ENCODE measurements at regions of chr10 and their contacts with region 1.

Region 1: GRCh38 chr10:24826019-24826418 is 102.3 kb upstream of the ARHGAP21 start:
- DNase-seq: peak; percentile 75
- H3K4me3 ChIP-seq: peak overlapping the region in 2 of 3 experiments; percentile 6 to 12
- H3K27ac ChIP-seq: peak overlapping the region; percentile 46
- H3K4me1 ChIP-seq: peaks cover 36% of the 10 kb centered on the region
- H3K27me3 ChIP-seq: no peaks in the 10 kb centered on the region
- CTCF ChIP-seq: no peak

Region 2: DNA sequence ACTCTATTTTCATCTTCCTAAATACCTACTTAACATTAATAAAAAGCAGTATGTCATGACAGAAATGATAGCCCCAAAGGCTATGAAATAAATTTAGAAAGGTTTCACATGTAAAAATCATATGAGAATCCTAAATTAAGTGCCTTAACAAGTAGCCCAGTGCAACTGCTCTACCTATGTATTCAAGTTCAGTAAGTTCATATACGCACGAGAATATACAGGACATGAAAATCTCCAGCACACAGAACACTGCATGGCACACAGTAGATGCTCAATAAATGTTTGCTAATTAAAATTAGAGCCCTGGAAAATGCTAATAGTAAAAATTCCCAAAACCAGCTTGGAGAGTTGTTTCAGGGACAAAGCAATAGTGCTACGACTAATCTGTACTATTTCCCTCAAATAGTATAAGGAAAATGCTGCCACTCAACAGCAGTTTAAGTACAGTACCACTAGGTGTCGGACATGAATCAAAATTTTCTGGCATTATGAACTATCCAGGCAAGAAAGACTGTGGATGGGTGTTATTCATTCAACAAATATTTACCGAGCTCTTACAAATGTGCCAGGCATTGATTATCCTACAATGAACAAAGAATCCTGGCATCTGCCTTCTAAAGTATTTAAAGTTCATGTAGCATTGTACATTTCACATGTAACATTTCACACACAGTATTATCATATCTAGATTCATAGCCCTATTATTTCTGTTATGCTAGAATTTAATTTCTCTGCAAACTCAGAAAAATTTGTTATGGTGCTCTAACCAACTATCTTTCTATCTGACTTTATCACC is 183.2 kb before region 1 on chr10:
- CTCF ChIA-PET with region 1: no interaction called
- dilution Hi-C with region 1: no loop called
- in situ Hi-C with region 1: no loop called
- intact Hi-C with region 1: loop called (anchors 10 kb)
- DNase-seq: peak; percentile 73
- H3K4me3 ChIP-seq: no peak overlapping the region
- H3K27ac ChIP-seq: no peak overlapping the region
- H3K4me1 ChIP-seq: peaks cover 10% of the 10 kb centered on the region
- H3K27me3 ChIP-seq: no peaks in the 10 kb centered on the region
- CTCF ChIP-seq: peak; percentile 76 to 81

Region 3: DNA sequence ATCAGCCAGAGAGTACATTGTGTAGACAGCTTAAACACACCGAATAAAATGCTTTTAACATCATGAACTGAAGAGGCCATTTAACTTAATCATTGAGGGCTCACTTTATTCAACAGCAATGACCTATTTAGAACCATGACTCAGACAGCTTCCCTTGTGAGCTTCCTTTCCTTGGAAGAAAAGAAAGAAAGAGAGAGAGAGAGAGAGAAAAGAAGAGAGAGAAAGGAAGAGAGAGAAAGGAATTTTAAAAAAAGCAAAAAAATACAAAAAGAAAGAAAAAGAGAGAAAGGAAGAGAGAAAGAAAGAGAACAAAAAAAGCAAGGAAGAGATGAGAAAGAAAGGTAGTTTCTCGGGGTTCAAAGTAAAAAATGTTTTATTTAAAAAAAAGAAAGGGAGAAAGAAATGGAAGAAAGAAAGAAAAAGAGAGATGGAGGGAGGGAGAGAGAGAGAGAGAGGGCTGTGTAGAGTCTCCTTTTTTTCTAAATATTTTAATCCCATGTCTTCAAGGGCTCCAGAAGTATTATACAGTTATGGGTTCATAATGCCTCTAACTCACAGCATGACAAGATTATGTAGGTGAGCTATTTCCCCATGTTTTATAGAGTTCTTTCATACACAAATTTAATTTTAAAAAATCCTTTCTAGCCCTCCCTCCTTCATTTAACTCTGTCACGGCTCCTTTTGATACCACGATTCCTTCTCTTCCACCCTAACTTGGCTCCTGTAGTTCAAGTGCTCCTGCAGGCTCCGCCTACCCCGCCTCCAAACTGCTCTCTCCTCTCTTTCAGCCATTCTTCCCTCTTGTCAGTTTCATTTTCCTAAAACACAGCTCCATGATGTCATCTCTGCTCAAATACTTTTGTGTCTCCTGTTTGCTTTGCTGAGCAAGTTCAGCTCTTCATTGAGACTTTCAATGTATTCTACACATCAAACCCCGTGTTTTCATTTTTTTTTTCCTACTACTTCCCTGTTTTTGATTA is 40.9 kb after region 1 on chr10:
- CTCF ChIA-PET with region 1: interaction called, 3 read pairs
- dilution Hi-C with region 1: no loop called
- in situ Hi-C with region 1: no loop called
- intact Hi-C with region 1: loop called (anchors 5 kb)
- DNase-seq: peak; percentile 64
- H3K4me3 ChIP-seq: no peak overlapping the region
- H3K27ac ChIP-seq: peak overlapping the region; percentile 42
- H3K4me1 ChIP-seq: peaks cover 26% of the 10 kb centered on the region
- H3K27me3 ChIP-seq: no peaks in the 10 kb centered on the region
- CTCF ChIP-seq: no peak

Region 4: DNA sequence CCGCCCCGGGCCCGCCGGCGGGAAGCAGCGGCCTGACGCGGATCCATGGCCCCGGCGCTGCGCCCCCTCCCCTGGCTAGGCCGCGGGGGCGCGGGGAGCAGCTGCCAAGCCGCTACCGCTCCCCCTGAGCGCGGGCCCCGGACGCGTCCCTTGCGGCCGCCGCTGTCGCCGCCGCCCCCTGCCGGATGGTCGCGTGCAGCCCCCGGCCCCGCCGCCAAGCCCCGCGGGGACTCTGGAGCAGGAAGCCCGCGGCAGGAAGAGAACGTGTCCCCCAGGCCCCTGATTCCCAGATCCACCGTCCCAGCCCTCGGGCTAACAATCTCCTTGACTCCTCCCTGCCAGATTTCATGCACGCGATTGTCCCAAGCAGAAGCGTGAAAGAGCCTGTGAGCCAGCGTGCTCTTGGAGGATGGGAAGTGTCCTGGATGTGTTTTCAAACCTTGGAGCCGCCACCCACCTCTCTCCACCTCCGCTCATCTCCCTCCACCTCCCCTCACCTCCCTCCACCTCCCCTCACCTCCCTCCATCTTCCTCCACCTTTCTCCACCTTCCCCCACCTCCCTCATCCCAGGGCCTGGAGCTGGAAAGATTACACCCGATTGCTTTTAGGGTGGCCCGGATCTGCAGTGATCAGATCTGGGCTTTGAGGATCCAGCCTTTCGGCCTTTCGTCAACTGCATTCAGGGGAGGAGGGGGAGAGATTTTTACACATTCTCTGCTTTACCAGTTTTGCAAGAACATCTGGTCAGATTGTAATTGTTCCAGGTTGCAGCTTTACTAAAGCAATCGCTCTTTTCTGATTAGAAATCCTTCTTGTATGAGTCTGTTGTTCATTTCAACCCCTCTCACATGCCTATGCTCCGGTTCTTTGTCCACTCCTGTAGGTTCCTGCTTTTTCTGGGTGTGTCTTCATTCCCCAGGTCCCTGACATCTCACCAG is 127.0 kb after region 1 on chr10:
- CTCF ChIA-PET with region 1: no interaction called
- dilution Hi-C with region 1: no loop called
- in situ Hi-C with region 1: loop called in 1 of 2 experiments (anchors 10 kb)
- intact Hi-C with region 1: loop called (anchors 5 kb)
- DNase-seq: no peak
- H3K4me3 ChIP-seq: peak overlapping the region in 2 of 3 experiments; percentile 37 to 54
- H3K27ac ChIP-seq: peak overlapping the region; percentile 25
- H3K4me1 ChIP-seq: peaks cover 24% of the 10 kb centered on the region
- H3K27me3 ChIP-seq: no peaks in the 10 kb centered on the region
- CTCF ChIP-seq: no peak

Region 5: DNA sequence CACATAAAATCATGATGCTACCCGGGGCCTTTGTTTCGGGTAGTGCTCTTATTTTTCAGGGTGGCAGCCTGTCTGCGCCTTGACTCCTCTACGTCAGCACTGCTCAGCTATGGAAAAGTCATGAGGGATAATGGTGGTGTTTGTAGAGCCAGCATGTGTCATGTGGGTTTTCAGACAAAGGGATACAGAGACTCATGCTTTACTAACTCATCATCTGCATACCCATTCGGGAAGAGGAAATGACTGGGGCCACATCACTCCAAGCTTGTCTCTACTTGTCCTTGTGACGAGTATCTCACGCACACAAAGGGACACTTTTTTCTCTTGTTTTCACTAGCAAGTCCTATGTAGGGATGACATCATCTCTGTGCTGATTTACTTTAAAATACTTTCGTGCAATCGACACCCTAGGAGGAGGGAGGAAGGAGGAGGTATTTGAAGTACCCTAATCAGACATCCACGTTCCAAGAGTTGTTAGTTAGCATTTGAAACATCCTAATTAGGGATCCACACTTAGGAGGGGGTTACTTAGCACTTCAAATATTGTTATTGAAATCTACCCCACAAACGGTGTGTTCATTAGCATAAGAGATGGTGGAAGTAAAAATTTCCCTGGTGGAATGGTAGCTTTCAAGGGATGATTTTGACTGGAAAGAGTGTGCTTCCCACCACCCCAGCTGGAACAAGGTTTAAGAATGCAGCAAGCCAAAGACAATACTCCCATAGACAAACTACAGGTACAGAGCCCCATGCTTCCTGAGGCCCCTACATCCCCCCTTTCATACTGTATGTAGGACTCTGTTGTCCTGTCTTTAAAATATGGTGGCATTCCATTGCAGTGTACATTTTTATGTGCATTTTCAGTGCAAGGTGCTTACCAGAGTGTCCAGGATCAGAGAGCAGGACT is 242.4 kb after region 1 on chr10:
- CTCF ChIA-PET with region 1: no interaction called
- dilution Hi-C with region 1: loop called (anchors 5 kb)
- in situ Hi-C with region 1: no loop called
- intact Hi-C with region 1: no loop called
- DNase-seq: peak; percentile 100
- H3K4me3 ChIP-seq: no peak overlapping the region
- H3K27ac ChIP-seq: peak overlapping the region; percentile 100
- H3K4me1 ChIP-seq: peaks cover 18% of the 10 kb centered on the region
- H3K27me3 ChIP-seq: no peaks in the 10 kb centered on the region
- CTCF ChIP-seq: no peak